K562 (cell line): ENCODE measurements at regions of chr11 and their contacts with region 1.

Region 1: GRCh38 chr11:90500922-90501568 is 278.2 kb upstream of the CHORDC1 start:
- DNase-seq: no peak
- ATAC-seq: no peak
- H3K4me3 ChIP-seq: no peak overlapping the region
- H3K27ac ChIP-seq: no peak overlapping the region
- H3K4me1 ChIP-seq: no peaks in the 10 kb centered on the region
- H3K27me3 ChIP-seq: no peaks in the 10 kb centered on the region
- CTCF ChIP-seq: no peak
- EP300 ChIP-seq: no peak
- POLR2A ChIP-seq: no peak
- RAD21 ChIP-seq: no peak

Region 2: GRCh38 chr11:90468923-90469322 is 32.1 kb before region 1 on chr11:
- CTCF ChIA-PET with region 1: no interaction called
- POLR2A ChIA-PET with region 1: no interaction called
- in situ Hi-C with region 1: no loop called
- intact Hi-C with region 1: no loop called
- DNase-seq: no peak
- ATAC-seq: no peak
- H3K4me3 ChIP-seq: no peak overlapping the region
- H3K27ac ChIP-seq: no peak overlapping the region
- H3K4me1 ChIP-seq: no peaks in the 10 kb centered on the region
- H3K27me3 ChIP-seq: no peaks in the 10 kb centered on the region
- CTCF ChIP-seq: no peak
- EP300 ChIP-seq: no peak
- POLR2A ChIP-seq: no peak
- RAD21 ChIP-seq: no peak

Region 3: DNA sequence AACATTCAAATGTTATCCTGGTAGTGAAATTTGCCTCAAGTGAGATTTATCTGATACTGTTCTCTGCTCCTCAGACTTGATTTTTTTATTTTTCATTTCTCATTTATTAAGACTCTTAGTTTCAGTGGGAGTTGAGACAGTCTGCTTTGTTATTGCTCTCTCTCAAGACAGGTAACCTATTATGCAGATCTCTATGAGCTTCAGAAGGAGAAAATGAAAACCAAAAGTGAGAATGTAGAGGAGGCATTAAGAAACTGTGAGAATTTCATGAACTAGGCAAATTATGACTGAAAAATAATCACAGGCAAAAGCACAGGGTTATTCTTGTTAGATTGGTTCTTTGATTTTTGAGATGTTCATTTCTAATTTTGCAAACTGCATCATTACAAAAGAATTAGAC is 11.8 kb after region 1 on chr11:
- CTCF ChIA-PET with region 1: no interaction called
- POLR2A ChIA-PET with region 1: no interaction called
- in situ Hi-C with region 1: no loop called
- intact Hi-C with region 1: no loop called
- DNase-seq: no peak
- ATAC-seq: no peak
- H3K4me3 ChIP-seq: no peak overlapping the region
- H3K27ac ChIP-seq: no peak overlapping the region
- H3K4me1 ChIP-seq: no peaks in the 10 kb centered on the region
- H3K27me3 ChIP-seq: no peaks in the 10 kb centered on the region
- CTCF ChIP-seq: no peak
- EP300 ChIP-seq: no peak
- POLR2A ChIP-seq: no peak
- RAD21 ChIP-seq: no peak

Region 4: DNA sequence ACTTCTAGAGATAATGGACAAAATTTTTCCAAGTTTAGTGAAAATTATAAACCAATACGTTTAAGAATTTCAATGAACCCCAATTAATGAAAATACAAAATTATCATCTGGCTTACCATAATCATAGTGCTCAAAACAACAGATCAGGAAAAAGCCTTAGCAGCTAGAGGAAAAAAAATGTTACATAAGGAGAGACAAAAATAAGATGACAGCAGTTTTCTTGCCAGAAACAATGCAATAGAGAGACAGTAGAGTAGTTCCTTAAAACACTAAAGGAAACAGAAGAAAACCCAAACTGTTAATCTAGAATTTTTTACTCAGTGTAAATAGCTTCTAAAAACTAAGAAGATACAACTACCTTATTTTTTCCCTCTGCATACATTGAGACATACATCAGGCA is 63.5 kb after region 1 on chr11:
- CTCF ChIA-PET with region 1: no interaction called
- POLR2A ChIA-PET with region 1: no interaction called
- in situ Hi-C with region 1: no loop called
- intact Hi-C with region 1: loop called (anchors 10 kb)
- DNase-seq: no peak
- ATAC-seq: no peak
- H3K4me3 ChIP-seq: no peak overlapping the region
- H3K27ac ChIP-seq: no peak overlapping the region
- H3K4me1 ChIP-seq: no peaks in the 10 kb centered on the region
- H3K27me3 ChIP-seq: no peaks in the 10 kb centered on the region
- CTCF ChIP-seq: no peak
- EP300 ChIP-seq: no peak
- POLR2A ChIP-seq: no peak
- RAD21 ChIP-seq: no peak